ENCODE measurements at regions of chr1 and their contacts with region 1.

Region 1: DNA sequence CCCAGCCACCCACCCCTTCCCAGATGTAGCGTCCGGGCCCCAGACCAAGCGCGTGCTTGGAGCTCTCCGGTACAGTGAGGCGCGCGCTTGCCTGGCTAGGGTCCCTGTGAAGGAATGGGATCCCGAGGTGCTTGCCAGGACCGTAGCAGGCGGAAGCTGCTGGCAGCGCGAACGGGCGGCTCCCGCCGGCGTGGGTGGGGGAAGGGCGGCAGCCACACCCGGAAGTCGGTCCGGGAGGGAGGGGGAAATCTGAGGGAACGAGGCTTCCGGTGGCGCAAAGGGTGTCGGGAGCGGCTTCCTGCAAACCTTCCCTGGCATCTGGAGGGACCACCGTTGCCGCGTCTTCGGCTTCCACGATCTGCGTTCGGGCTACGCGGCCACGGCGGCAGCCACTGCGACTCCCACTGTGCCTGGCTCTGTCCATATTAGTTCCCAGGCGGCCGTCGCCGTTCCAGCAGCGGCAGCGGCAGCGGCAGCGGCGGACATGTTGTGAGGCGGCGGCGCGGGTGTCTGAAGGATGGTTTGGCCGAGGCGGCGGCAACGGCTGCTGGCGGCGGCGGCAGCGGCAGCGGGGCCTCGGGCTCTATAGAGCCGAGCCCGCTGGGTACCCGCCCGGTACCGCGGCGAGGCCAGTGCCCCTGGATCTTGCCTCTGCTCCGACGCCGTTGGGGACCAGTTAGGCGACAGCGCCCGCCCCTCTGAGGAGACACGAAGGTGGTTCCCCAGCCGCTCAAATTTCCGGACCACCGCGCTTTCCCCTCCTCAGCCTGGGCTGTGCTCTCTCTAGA is at the start of gene DR1:
- DNase-seq: peak; percentile 87 to 92 (median 89)
- H3K4me3 ChIP-seq: peak within 1 kb of the TSS; percentile 80 to 100
- H3K4me3 Mint-ChIP-seq: peak within 1 kb of the TSS; percentile 96 to 99 (median 98)
- H3K27ac ChIP-seq: peak within 1 kb of the TSS; percentile 91
- H3K27ac Mint-ChIP-seq: peak within 1 kb of the TSS; percentile 95 to 99 (median 98)
- H3K4me1 ChIP-seq: peaks cover 46% of the 10 kb centered on the region
- H3K4me1 Mint-ChIP-seq: peaks cover 23 to 59% (median 30%) of the 10 kb centered on the region in 4 donors
- H3K27me3 ChIP-seq: no peaks in the 10 kb centered on the region
- H3K27me3 Mint-ChIP-seq: no peaks in the 10 kb centered on the region
- total RNA-seq, gene DR1: 71.8 to 71.9 TPM

Region 2: GRCh38 chr1:92831762-92832536 is 513.9 kb before region 1 on chr1 and contains the start of gene RPL5:
- CTCF ChIA-PET with region 1: no interaction called
- POLR2A ChIA-PET with region 1: interaction called, 9 read pairs
- intact Hi-C with region 1: loop called (anchors 1 kb)
- DNase-seq: peak; percentile 97 to 100 (median 98)
- H3K4me3 ChIP-seq: peak within 1 kb of the TSS; percentile 54 to 100
- H3K4me3 Mint-ChIP-seq: peak within 1 kb of the TSS; percentile 98 to 100 (median 100)
- H3K27ac ChIP-seq: peak within 1 kb of the TSS; percentile 93
- H3K27ac Mint-ChIP-seq: peak within 1 kb of the TSS; percentile 98 to 100 (median 99)
- H3K4me1 ChIP-seq: peaks cover 46% of the 10 kb centered on the region
- H3K4me1 Mint-ChIP-seq: peaks cover 35 to 55% (median 45%) of the 10 kb centered on the region in 4 donors
- H3K27me3 ChIP-seq: no peaks in the 10 kb centered on the region
- H3K27me3 Mint-ChIP-seq: peaks cover 0 to 1% of the 10 kb centered on the region in 2 donors
- total RNA-seq, gene RPL5: 1,501 to 1,588 TPM

Region 3: DNA sequence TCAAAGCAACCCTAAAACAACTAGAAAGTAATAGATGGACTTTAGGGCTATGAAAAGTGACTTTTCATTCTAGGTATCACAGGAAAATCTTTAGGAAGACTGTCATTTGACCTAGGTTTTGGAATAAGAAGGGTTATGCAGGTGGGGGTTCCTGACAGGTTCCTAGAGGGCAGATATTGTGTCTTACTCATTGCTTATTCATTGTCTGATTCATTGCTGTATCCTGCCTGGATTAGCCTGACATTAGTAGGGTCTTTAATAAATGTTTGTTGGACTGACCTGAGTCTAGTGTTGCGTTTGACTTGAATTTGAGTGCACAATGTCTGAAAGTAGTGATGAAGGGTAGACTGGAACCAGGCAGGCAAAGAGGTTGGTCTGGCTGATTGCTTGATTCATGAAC is 108.1 kb after region 1 on chr1:
- CTCF ChIA-PET with region 1: no interaction called
- POLR2A ChIA-PET with region 1: no interaction called
- intact Hi-C with region 1: loop called (anchors 5 kb)
- DNase-seq: no peak
- H3K4me3 ChIP-seq: no peak overlapping the region
- H3K4me3 Mint-ChIP-seq: no peak overlapping the region
- H3K27ac ChIP-seq: no peak overlapping the region
- H3K27ac Mint-ChIP-seq: no peak overlapping the region
- H3K4me1 ChIP-seq: peaks cover 7% of the 10 kb centered on the region
- H3K4me1 Mint-ChIP-seq: peaks cover 5 to 7% (median 6%) of the 10 kb centered on the region in 4 donors
- H3K27me3 ChIP-seq: peaks cover 23% of the 10 kb centered on the region
- H3K27me3 Mint-ChIP-seq: peaks cover 27 to 40% of the 10 kb centered on the region in 2 donors

Region 4: DNA sequence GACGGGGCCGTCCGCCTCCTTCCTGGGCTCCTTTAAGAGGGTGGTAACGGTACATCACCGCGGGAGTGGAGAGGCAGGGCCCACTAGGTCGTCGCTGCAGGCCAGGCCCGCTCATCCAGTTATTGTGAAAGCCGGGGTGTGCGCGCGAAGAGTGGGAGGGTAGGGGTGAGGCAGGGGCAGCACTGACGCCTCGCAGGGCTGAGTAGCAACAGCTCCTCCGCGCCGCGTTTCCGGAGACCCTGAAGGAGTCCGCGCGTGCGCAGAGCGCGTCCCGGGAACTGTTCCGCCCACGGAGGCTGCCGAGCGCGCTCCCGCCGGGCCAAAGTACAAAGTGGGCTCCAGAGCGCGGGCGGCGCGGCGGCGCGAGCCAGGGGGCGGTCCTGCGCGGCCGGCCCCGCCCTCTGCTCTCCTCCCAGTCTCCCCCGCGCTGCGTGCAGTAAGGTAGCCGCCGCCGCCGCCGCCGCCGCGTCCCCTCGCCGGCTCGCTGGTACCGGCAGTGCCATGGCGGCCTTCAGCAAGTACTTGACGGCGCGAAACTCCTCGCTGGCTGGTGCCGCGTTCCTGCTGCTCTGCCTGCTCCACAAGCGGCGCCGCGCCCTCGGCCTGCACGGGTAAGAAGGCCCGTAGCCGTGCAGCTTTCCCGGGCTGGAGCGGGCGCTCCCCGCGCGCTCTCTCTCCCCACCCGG is 1072.3 kb after region 1 on chr1 and contains the start of gene ABCD3:
- CTCF ChIA-PET with region 1: no interaction called
- POLR2A ChIA-PET with region 1: no interaction called
- intact Hi-C with region 1: loop called (anchors 1 kb)
- DNase-seq: peak; percentile 96 to 99 (median 98)
- H3K4me3 ChIP-seq: peak within 1 kb of the TSS; percentile 59 to 88
- H3K4me3 Mint-ChIP-seq: peak within 1 kb of the TSS in 2 of 8 donors; percentile 90 to 91
- H3K27ac ChIP-seq: peak within 1 kb of the TSS; percentile 70
- H3K27ac Mint-ChIP-seq: peak within 1 kb of the TSS in 6 of 7 donors; percentile 37 to 92 (median 88)
- H3K4me1 ChIP-seq: peaks cover 46% of the 10 kb centered on the region
- H3K4me1 Mint-ChIP-seq: peaks cover 23 to 40% (median 28%) of the 10 kb centered on the region in 4 donors
- H3K27me3 ChIP-seq: no peaks in the 10 kb centered on the region
- H3K27me3 Mint-ChIP-seq: peaks cover 0 to 4% of the 10 kb centered on the region in 2 donors
- total RNA-seq, gene ABCD3: 23.6 to 23.8 TPM

Region 5: GRCh38 chr1:94962409-94963265 is 1616.8 kb after region 1 on chr1:
- CTCF ChIA-PET with region 1: no interaction called
- POLR2A ChIA-PET with region 1: no interaction called
- intact Hi-C with region 1: loop called (anchors 5 kb)
- DNase-seq: peak in 4 of 5 donors; percentile 8 to 33 (median 26)
- H3K4me3 ChIP-seq: peak overlapping the region; percentile 58 to 68
- H3K4me3 Mint-ChIP-seq: peak overlapping the region; percentile 86 to 99 (median 94)
- H3K27ac ChIP-seq: peak overlapping the region; percentile 38
- H3K27ac Mint-ChIP-seq: peak overlapping the region; percentile 24 to 97 (median 92)
- H3K4me1 ChIP-seq: peaks cover 15% of the 10 kb centered on the region
- H3K4me1 Mint-ChIP-seq: peaks cover 4 to 12% (median 6%) of the 10 kb centered on the region in 4 donors
- H3K27me3 ChIP-seq: no peaks in the 10 kb centered on the region
- H3K27me3 Mint-ChIP-seq: no peaks in the 10 kb centered on the region

Measured in CD4-positive, alpha-beta memory T cell (primary cell).